ENCODE measurements at regions of chr17 and their contacts with region 1.

Region 1: GRCh38 chr17:42019509-42020404 is at the start of gene NKIRAS2:
- DNase-seq: peak; percentile 89
- H3K4me3 ChIP-seq: peak within 1 kb of the TSS; percentile 89 to 96 (median 93)
- H3K27ac ChIP-seq: peak within 1 kb of the TSS; percentile 86
- H3K4me1 ChIP-seq: peaks cover 24% of the 10 kb centered on the region
- H3K27me3 ChIP-seq: no peaks in the 10 kb centered on the region
- CTCF ChIP-seq: peak; percentile 91 to 96
- POLR2A ChIP-seq: peak; percentile 92
- total RNA-seq, gene NKIRAS2: 57.3 and 60.4 TPM in 2 replicates

Region 2: DNA sequence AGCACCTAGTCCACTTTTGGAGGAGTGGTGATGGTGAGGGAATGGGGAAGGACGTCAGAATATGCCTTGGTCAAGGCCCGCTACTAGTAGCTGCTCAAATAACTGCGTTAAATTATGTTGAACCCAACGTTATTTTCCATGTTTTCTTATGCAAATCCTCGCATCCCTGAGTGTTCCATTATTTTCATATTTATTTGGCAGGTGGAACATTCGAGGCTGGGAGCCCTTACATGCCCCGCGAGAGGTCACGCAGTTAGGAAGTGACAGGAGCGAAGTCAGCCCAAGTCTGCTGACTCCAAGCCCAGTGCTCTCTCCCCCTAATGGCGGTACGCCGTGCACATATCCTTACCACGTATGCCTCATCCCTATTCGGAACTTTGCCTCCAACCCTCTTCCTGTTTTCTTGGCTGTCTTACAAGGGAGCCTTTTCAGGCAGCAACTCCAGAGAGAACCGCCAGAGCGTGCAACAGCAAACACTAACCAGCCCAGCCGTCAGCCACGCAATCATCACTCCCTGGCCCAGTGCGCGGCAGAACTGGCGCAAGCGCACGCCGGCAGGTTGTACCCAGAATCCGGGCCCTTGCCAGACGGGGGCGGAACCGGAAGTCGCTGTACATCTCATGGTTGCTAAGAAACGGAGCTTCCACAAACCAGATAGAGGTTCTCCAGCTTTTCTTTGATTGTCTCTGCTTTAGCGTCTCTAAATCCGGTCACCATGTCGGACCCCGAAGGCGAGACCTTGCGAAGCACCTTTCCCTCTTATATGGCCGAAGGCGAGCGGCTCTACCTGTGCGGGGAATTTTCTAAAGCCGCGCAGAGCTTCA is 89.5 kb before region 1 on chr17 and contains the start of gene ODAD4:
- CTCF ChIA-PET with region 1: interaction called, 3 read pairs
- POLR2A ChIA-PET with region 1: no interaction called
- dilution Hi-C with region 1: no loop called
- intact Hi-C with region 1: loop called (anchors 1 kb)
- DNase-seq: peak; percentile 99
- H3K4me3 ChIP-seq: peak within 1 kb of the TSS in 2 of 3 experiments; percentile 25 to 51
- H3K27ac ChIP-seq: peak within 1 kb of the TSS; percentile 50
- H3K4me1 ChIP-seq: peaks cover 8% of the 10 kb centered on the region
- H3K27me3 ChIP-seq: peaks cover 0 to 3% of the 10 kb centered on the region in 2 experiments
- CTCF ChIP-seq: peak; percentile 44 to 59
- POLR2A ChIP-seq: peak; percentile 84
- total RNA-seq, gene ODAD4: 0.60 and 1.0 TPM in 2 replicates

Region 3: DNA sequence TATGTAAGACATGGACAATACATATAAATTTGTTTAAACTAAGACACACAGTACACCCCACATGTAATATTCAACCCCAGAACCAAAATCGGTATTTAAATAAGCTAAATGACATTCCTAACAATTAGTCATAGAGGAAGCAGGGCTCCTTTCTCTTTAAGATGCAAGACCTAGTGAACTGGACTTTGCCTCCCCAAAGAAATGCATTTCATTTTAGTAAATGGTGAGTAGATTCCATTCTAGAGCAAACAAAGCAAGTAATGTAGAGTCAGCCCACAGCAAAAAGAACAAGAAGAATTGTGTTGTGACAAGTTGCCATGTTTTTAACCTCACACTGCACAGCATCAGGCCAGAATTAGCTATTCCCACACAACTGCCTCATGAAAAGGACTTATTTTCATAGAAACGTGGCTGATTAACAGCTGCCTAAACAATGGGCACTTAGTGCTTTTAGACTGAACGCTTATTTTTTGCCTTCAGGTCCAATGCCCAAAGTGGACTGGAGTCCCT is 16.9 kb before region 1 on chr17:
- CTCF ChIA-PET with region 1: interaction called, 13 read pairs
- POLR2A ChIA-PET with region 1: interaction called, 3 read pairs
- dilution Hi-C with region 1: no loop called
- intact Hi-C with region 1: no loop called
- DNase-seq: peak; percentile 17
- H3K4me3 ChIP-seq: no peak overlapping the region
- H3K27ac ChIP-seq: peak overlapping the region; percentile 4
- H3K4me1 ChIP-seq: peaks cover 16% of the 10 kb centered on the region
- H3K27me3 ChIP-seq: no peaks in the 10 kb centered on the region
- CTCF ChIP-seq: no peak
- POLR2A ChIP-seq: no peak

Region 4: GRCh38 chr17:42034059-42034458 is 14.3 kb after region 1 on chr17:
- CTCF ChIA-PET with region 1: interaction called, 21 read pairs
- POLR2A ChIA-PET with region 1: no interaction called
- dilution Hi-C with region 1: no loop called
- intact Hi-C with region 1: no loop called
- DNase-seq: no peak
- H3K4me3 ChIP-seq: no peak overlapping the region
- H3K27ac ChIP-seq: no peak overlapping the region
- H3K4me1 ChIP-seq: no peaks in the 10 kb centered on the region
- H3K27me3 ChIP-seq: peaks cover 0 to 1% of the 10 kb centered on the region in 2 experiments
- CTCF ChIP-seq: no peak
- POLR2A ChIP-seq: no peak

Region 5: GRCh38 chr17:42112552-42113176 is 92.9 kb after region 1 on chr17 and contains the start of gene DHX58:
- CTCF ChIA-PET with region 1: interaction called, 6 read pairs
- POLR2A ChIA-PET with region 1: no interaction called
- dilution Hi-C with region 1: no loop called
- intact Hi-C with region 1: loop called (anchors 1 kb)
- DNase-seq: peak; percentile 88
- H3K4me3 ChIP-seq: peak within 1 kb of the TSS in 2 of 3 experiments; percentile 29 to 31
- H3K27ac ChIP-seq: peak within 1 kb of the TSS; percentile 5
- H3K4me1 ChIP-seq: peaks cover 9% of the 10 kb centered on the region
- H3K27me3 ChIP-seq: no peaks in the 10 kb centered on the region
- CTCF ChIP-seq: no peak
- POLR2A ChIP-seq: peak; percentile 74
- total RNA-seq, gene DHX58: 3.1 and 6.4 TPM in 2 replicates

Region 6: DNA sequence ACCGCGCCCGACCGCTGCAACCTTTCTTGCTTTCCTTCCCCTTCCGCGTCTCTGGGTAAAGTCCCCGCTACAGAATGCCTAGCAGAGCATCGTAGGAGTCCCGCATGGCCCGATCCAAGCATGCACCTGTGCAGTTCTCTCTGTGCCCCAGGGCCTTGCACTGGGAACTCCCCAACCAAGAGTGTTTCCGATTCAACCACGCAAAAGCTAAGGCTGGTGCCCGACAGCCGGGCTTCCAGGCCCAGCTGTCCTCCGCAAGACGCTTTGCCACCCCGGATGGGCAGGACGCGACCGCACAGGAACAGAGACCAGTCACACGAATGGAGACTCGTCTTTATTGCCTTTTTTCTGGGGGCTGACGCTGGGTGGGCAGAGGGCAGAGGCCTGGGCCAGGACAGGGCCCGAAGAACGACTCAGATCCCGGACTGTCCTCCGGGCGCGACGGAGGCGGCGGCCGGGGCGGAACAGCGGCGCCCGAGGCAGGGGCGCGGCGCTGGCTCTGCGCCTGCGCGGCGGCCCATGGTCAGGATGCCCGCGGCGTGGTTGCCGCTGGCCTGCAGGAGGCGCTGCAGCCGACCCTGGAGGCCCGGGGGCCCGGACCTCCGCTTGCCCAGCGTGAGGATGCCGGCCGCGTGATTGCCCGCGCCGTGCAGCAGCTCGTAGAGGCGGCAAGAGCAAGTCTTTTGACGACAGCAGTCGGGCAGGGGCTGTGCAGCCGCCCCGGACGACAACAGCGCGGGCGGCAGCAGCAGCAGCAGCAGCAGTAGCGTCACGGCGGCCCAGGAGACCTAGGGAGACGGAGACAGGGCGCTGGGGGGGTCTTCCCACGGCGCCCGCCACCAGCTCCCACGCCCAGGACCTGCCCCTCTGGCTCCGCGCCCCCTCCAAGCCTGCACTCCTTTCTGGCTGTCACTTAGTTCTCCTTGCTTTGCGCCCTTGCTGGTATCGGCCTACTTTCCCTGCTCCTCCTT is 164.3 kb after region 1 on chr17:
- CTCF ChIA-PET with region 1: interaction called, 6 read pairs
- POLR2A ChIA-PET with region 1: no interaction called
- dilution Hi-C with region 1: no loop called
- intact Hi-C with region 1: loop called (anchors 2 kb)
- DNase-seq: peak; percentile 70
- H3K4me3 ChIP-seq: peak overlapping the region; percentile 35 to 51 (median 45)
- H3K27ac ChIP-seq: peak overlapping the region; percentile 16
- H3K4me1 ChIP-seq: peaks cover 14% of the 10 kb centered on the region
- H3K27me3 ChIP-seq: peaks cover 9 to 13% of the 10 kb centered on the region in 2 experiments
- CTCF ChIP-seq: peak; percentile 86 to 99
- POLR2A ChIP-seq: peak; percentile 38